Heart left ventricle (tissue), 16 donors: ENCODE measurements at regions of chr1 and their contacts with region 1.

Region 1: GRCh38 chr1:51535006-51535592 is 16.0 kb upstream of the EPS15 start:
- DNase-seq: peak in 3 of 5 donors; percentile 33 to 46 (median 42)
- ATAC-seq: peak in 3 of 4 donors; percentile 24 to 67 (median 55)
- H3K4me3 ChIP-seq: no peak overlapping the region
- H3K27ac ChIP-seq: peak overlapping the region in 2 of 12 donors; percentile 6 to 16
- H3K4me1 ChIP-seq: peaks cover 0 to 10% (median 6%) of the 10 kb centered on the region in 12 donors
- H3K27me3 ChIP-seq: no peaks in the 10 kb centered on the region
- CTCF ChIP-seq: peak; percentile 53 to 83 (median 70)
- POLR2A ChIP-seq: no peak

Region 2: GRCh38 chr1:51329443-51330325 is 205.4 kb before region 1 on chr1:
- intact Hi-C with region 1: loop called in 1 of 10 experiments (anchors 10 kb)
- DNase-seq: peak in 4 of 5 donors; percentile 65 to 86 (median 80)
- ATAC-seq: peak; percentile 72 to 81 (median 76)
- H3K4me3 ChIP-seq: peak overlapping the region in 9 of 12 donors; percentile 28 to 69 (median 39)
- H3K27ac ChIP-seq: peak overlapping the region in 11 of 12 donors; percentile 27 to 90 (median 69)
- H3K4me1 ChIP-seq: peaks cover 0 to 42% (median 14%) of the 10 kb centered on the region in 12 donors
- H3K27me3 ChIP-seq: peaks cover 0 to 16% (median 0%) of the 10 kb centered on the region in 9 donors
- CTCF ChIP-seq: no peak
- POLR2A ChIP-seq: peak in 1 of 2 donors; percentile 23

Region 3: DNA sequence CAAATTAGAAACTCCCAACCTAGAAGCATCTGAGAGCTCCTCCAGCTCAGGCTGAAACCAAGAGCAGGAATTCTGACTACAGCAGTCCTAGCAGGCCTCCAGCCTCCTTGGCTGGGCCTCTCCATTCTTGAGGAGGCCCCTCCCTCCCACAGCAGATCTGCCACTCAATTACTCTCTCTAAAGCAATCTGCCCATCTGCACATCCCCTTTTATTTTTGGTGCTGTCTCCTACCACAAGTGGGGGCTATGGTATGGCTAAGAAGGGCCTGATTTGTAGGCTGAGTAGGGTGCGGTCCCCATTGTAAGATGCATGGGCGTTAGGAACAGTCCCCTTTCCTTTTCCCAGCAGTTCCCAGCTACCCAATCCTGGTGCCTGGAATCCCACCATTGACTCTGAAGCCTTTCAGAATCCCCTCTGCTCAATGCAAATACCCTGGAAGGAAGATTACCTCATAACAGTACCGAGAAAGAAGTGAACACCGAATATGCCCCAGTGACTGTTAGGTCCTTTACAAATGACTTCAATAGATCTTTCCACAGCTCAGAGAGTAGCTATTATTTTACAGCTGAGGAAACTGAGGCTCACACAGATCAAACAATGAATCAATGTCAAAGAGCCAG is 193.1 kb before region 1 on chr1:
- intact Hi-C with region 1: loop called in 1 of 10 experiments (anchors 10 kb)
- DNase-seq: no peak
- ATAC-seq: no peak
- H3K4me3 ChIP-seq: no peak overlapping the region
- H3K27ac ChIP-seq: no peak overlapping the region
- H3K4me1 ChIP-seq: peaks cover 0 to 11% (median 3%) of the 10 kb centered on the region in 12 donors
- H3K27me3 ChIP-seq: peaks cover 7 to 34% (median 26%) of the 10 kb centered on the region in 9 donors
- CTCF ChIP-seq: no peak
- POLR2A ChIP-seq: no peak

Region 4: GRCh38 chr1:51351907-51352306 is 183.2 kb before region 1 on chr1:
- intact Hi-C with region 1: loop called in 2 of 10 experiments (anchors 10 kb)
- DNase-seq: no peak
- ATAC-seq: no peak
- H3K4me3 ChIP-seq: no peak overlapping the region
- H3K27ac ChIP-seq: no peak overlapping the region
- H3K4me1 ChIP-seq: no peaks in the 10 kb centered on the region
- H3K27me3 ChIP-seq: no peaks in the 10 kb centered on the region
- CTCF ChIP-seq: no peak
- POLR2A ChIP-seq: no peak